ENCODE measurements at regions of chr1 and their contacts with region 1.

Region 1: GRCh38 chr1:154747740-154748404 is 122.2 kb downstream of the KCNN3 start:
- DNase-seq: no peak
- ATAC-seq: no peak
- H3K4me3 ChIP-seq: no peak overlapping the region
- H3K27ac ChIP-seq: no peak overlapping the region
- H3K4me1 ChIP-seq: no peaks in the 10 kb centered on the region
- H3K27me3 ChIP-seq: peaks cover 9% of the 10 kb centered on the region
- CTCF ChIP-seq: no peak

Region 2: DNA sequence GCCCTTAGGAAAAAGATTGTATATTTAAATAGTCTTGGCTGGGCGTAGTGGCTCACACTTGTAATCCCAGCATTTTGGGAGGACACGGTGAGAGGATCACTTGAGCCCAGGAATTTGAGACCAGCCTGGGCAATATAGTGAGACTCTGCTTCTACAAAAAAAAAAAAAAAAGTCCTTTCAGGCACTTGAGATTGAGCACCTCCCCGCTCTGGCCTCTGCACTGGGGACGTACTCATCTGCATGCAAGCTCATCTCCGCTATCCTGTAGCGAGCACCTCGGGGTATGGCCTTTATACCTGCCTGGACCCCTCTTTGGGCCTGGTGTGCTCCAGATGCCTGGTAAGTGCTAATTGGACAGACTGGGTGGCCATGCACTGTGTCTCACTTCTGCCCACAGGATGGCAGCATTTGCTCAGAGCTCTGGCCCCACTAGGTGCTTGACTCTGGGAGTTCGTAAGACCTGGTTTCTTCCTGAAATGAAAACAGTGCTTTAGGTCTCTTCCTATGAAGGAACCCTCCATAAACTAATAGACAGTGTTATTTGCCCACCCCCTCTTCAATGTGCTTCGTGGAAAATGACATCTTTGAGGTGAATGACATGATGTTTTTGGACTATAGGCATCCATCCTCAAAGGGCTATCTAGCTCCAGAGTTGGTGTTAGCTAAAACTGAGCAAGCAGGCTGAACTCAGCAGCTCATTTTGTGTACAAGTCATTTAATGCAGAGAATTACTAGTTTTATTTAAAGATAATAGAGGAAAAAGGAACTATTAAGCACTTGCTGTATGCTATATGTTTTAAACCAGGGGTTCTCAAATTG is 78.2 kb before region 1 on chr1:
- CTCF ChIA-PET with region 1: no interaction called
- POLR2A ChIA-PET with region 1: interaction called, 3 read pairs
- in situ Hi-C with region 1: no loop called
- intact Hi-C with region 1: loop called (anchors 5 kb)
- DNase-seq: peak; percentile 75
- ATAC-seq: peak; percentile 100
- H3K4me3 ChIP-seq: no peak overlapping the region
- H3K27ac ChIP-seq: no peak overlapping the region
- H3K4me1 ChIP-seq: no peaks in the 10 kb centered on the region
- H3K27me3 ChIP-seq: no peaks in the 10 kb centered on the region
- CTCF ChIP-seq: peak; percentile 91

Region 3: DNA sequence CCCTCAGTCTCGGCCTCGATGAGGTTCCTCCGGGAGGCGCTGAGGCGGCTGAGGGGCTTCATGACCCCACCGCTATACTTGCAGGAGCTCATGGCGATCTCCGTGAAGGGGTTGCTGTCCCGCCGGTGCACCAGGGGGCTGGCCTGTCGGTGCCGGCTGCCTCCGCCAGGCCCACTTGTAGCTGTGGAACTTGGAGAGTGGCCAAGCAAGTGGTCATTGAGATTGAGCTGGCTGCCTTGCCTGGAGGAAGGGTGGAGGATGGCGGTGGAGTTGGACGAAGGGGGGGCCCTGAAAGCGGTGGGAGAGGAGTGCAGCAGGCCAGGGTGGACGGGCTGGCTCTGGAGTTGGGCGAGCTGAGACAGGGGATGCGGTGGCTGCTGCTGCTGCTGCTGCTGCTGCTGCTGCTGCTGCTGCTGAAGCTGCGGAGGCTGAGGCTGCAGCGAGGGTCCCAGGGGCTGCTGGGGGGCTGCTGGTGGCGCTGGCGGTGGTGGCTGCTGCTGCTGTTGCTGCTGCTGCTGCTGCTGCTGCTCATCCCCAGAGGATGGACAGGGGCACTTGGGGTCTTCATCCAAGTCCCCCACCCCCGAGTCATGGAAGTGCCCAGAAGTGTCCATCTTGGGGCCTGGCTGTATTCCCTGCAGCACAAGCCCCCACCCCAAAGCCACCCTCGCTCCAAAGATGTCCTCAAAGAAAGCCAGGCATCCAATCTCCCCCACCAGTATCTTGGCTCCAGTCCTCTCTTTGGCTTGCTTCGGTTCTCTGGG is 121.7 kb after region 1 on chr1:
- CTCF ChIA-PET with region 1: interaction called, 4 read pairs
- POLR2A ChIA-PET with region 1: interaction called, 15 read pairs
- in situ Hi-C with region 1: no loop called
- intact Hi-C with region 1: no loop called
- DNase-seq: no peak
- ATAC-seq: no peak
- H3K4me3 ChIP-seq: peak overlapping the region; percentile 24 to 46
- H3K27ac ChIP-seq: no peak overlapping the region
- H3K4me1 ChIP-seq: no peaks in the 10 kb centered on the region; the same call in 1 of the 2 replicates
- H3K27me3 ChIP-seq: no peaks in the 10 kb centered on the region; the same call in none of the 2 replicates
- CTCF ChIP-seq: no peak

Measured in Panc1 (cell line).